Brain microvascular endothelial cell (primary cell): ENCODE measurements at regions of chr1 and their contacts with region 1.

Region 1: GRCh38 chr1:108125312-108126138 is 74.6 kb downstream of the SLC25A24 start:
- DNase-seq: peak; percentile 61
- H3K4me3 ChIP-seq: no peak overlapping the region
- H3K27ac ChIP-seq: no peak overlapping the region
- H3K27me3 ChIP-seq: no peaks in the 10 kb centered on the region
- CTCF ChIP-seq: peak; percentile 95

Region 2: DNA sequence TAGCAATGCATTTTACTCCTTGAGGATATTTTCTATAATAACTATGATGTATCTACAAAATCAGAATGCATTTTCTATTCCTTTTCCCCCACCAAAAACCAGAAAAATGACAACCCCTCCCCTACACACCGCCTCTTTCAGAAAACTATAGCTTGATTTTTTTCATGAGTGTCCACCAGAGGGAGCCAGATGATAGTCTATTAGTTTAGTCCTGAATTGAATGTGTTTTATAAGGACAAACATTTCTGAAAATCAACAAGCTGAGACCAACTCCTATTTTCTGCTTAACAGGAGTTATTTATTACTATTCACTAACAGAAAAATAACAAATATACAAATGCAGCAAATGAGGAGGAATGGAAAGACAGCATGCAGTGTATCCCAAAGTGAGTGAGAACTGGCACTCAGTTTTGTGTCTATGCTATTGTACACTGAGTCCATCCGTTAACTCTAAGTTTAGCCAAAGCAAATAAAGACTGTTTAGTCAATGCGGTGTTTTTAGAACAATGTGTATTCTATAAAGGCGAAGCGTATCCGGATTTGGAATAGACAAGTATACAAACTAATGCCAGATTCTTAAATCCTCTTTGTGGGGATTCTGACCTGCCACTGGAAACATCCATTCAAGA is 343.2 kb before region 1 on chr1:
- in situ Hi-C with region 1: loop called (anchors 25 kb)
- DNase-seq: peak; percentile 38
- H3K4me3 ChIP-seq: no peak overlapping the region
- H3K27ac ChIP-seq: no peak overlapping the region
- H3K27me3 ChIP-seq: no peaks in the 10 kb centered on the region
- CTCF ChIP-seq: peak; percentile 54